AG04449 (cell line): ENCODE measurements at regions of chr1 and their contacts with region 1.

Region 1: GRCh38 chr1:9494929-9495758 is 44.1 kb upstream of the SLC25A33 start:
- DNase-seq: no peak
- H3K4me3 ChIP-seq: peak overlapping the region; percentile 43
- CTCF ChIP-seq: peak; percentile 91

Region 2: GRCh38 chr1:9270290-9270883 is 224.8 kb before region 1 on chr1:
- CTCF ChIA-PET with region 1: interaction called, 195 read pairs
- POLR2A ChIA-PET with region 1: interaction called, 3 read pairs
- DNase-seq: no peak
- H3K4me3 ChIP-seq: no peak overlapping the region
- CTCF ChIP-seq: no peak

Region 3: DNA sequence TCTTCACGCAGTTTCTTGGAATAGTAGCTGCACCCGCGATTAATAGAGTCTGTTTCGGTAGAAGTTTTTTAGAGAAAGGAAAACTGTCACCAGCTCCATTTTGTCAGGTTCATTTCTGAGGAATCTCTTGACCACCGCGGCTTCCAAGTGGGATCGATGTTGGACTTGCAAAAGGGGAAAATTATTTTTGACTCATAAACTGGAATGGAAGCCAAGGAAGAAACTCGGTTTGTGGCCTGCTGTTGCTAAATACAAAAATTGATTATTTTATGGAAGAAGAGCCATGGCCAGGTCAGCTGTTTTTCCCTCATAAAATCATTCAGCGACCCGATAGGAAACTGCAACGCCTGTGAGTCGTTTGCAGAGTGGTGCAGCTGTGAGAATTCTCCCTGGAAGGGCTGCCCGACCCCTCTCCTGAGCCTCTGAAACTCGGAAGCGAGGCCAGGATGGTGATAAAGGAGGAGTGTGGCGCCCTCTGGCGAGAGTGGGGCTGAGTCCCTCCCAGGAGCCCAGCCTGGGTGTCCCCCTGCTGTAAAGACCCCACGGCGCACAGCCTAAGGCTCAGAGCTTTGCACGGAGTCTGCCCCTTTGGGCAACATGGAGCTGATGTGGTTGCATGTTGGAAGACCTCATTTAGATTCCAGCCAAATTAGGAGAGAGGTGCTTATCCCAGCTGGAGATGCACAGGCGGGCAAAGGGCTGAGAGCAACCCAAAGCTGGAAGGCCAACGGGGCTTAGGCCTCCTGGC is 39.5 kb before region 1 on chr1:
- CTCF ChIA-PET with region 1: interaction called, 18 read pairs
- POLR2A ChIA-PET with region 1: no interaction called
- DNase-seq: no peak
- H3K4me3 ChIP-seq: no peak overlapping the region
- CTCF ChIP-seq: peak; percentile 87

Region 4: DNA sequence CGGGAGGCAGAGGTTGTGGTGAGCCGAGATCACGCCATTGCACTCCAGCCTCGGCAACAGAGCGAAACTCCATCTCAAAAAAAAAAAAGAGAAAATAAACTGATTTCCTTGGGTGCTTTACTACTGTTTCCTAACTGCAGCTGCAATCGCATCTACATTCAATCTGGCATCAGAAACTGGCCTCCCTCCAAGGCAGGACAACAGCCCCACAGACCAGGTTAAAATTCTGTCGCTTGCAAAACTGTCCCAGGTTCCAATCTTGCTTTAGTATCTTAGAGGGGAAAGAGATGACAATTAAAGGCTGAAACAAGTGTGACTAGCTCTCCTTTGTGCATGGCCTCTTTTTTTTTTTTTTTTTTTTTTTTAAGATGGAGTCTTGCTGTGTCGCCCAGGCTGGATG is 11.8 kb after region 1 on chr1:
- CTCF ChIA-PET with region 1: interaction called, 25 read pairs
- POLR2A ChIA-PET with region 1: no interaction called
- DNase-seq: no peak
- H3K4me3 ChIP-seq: no peak overlapping the region
- CTCF ChIP-seq: no peak

Region 5: DNA sequence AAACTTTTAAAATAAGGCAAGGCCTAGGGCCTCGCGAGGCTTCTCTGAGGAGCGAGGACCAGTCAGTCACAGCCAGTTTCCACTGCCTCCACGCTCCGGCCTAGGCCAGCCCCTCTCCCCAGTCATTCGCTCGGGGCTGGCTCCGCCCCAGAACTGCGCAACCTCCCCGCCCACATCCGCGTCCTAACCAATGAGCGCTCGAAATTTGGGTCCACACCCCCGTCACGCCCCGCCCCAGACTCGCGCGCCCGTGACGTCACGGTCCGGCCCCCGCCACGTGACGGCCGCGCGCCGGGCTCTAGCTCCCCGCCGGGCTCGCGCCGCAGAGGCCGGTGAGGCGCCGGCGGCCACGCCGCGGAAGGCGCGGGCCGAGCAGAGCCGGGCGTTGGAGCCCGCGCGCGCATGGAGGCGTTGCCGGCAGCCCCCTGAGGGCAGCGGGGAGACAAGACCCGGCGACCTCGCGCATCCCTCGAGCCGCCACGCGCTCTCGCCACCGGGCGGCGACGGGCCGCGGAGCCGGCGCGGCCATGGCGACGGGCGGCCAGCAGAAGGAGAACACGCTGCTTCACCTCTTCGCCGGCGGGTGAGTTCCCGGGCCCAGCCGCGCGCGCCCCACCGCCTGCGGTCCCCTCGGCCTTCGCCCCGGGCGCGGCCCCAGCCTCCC is 44.2 kb after region 1 on chr1 and contains the start of gene SLC25A33:
- CTCF ChIA-PET with region 1: interaction called, 28 read pairs
- POLR2A ChIA-PET with region 1: no interaction called
- DNase-seq: peak; percentile 70
- H3K4me3 ChIP-seq: peak within 1 kb of the TSS; percentile 83
- CTCF ChIP-seq: no peak